Natural killer cell (primary cell): ENCODE measurements at regions of chr1 and their contacts with region 1.

Region 1: GRCh38 chr1:63615768-63616420 is 22.7 kb downstream of the PGM1 start:
- DNase-seq: peak; percentile 27 to 85
- ATAC-seq: peak; percentile 81 to 84 (median 82)
- H3K4me3 ChIP-seq: no peak overlapping the region
- H3K4me3 Mint-ChIP-seq: no peak overlapping the region
- H3K27ac ChIP-seq: no peak overlapping the region
- H3K27ac Mint-ChIP-seq: no peak overlapping the region
- H3K4me1 ChIP-seq: no peaks in the 10 kb centered on the region
- H3K4me1 Mint-ChIP-seq: peaks cover 23 to 26% of the 10 kb centered on the region in 2 donors
- H3K27me3 ChIP-seq: no peaks in the 10 kb centered on the region
- H3K27me3 Mint-ChIP-seq: no peaks in the 10 kb centered on the region
- CTCF ChIP-seq: peak; percentile 86

Region 2: GRCh38 chr1:63915121-63915520 is 299.2 kb after region 1 on chr1:
- intact Hi-C with region 1: loop called (anchors 1 kb)
- DNase-seq: peak in 1 of 2 donors; percentile 11
- ATAC-seq: peak in 2 of 3 donors; percentile 53 to 67
- H3K4me3 ChIP-seq: no peak overlapping the region
- H3K4me3 Mint-ChIP-seq: no peak overlapping the region
- H3K27ac ChIP-seq: no peak overlapping the region
- H3K27ac Mint-ChIP-seq: no peak overlapping the region
- H3K4me1 ChIP-seq: no peaks in the 10 kb centered on the region
- H3K4me1 Mint-ChIP-seq: no peaks in the 10 kb centered on the region
- H3K27me3 ChIP-seq: no peaks in the 10 kb centered on the region
- H3K27me3 Mint-ChIP-seq: peaks cover 6 to 17% of the 10 kb centered on the region in 2 donors
- CTCF ChIP-seq: no peak

Region 3: GRCh38 chr1:64136752-64137411 is 521.0 kb after region 1 on chr1:
- intact Hi-C with region 1: loop called (anchors 1 kb)
- DNase-seq: peak; percentile 43 to 78
- ATAC-seq: peak; percentile 70 to 88 (median 75)
- H3K4me3 ChIP-seq: no peak overlapping the region
- H3K4me3 Mint-ChIP-seq: no peak overlapping the region
- H3K27ac ChIP-seq: no peak overlapping the region
- H3K27ac Mint-ChIP-seq: no peak overlapping the region
- H3K4me1 ChIP-seq: no peaks in the 10 kb centered on the region
- H3K4me1 Mint-ChIP-seq: no peaks in the 10 kb centered on the region
- H3K27me3 ChIP-seq: no peaks in the 10 kb centered on the region
- H3K27me3 Mint-ChIP-seq: peaks cover 5 to 17% of the 10 kb centered on the region in 2 donors
- CTCF ChIP-seq: peak; percentile 78

Region 4: GRCh38 chr1:64246294-64246917 is 630.5 kb after region 1 on chr1:
- intact Hi-C with region 1: loop called (anchors 1 kb)
- DNase-seq: peak in 1 of 2 donors; percentile 60
- ATAC-seq: peak in 1 of 3 donors; percentile 37
- H3K4me3 ChIP-seq: no peak overlapping the region
- H3K4me3 Mint-ChIP-seq: no peak overlapping the region
- H3K27ac ChIP-seq: no peak overlapping the region
- H3K27ac Mint-ChIP-seq: no peak overlapping the region
- H3K4me1 ChIP-seq: no peaks in the 10 kb centered on the region
- H3K4me1 Mint-ChIP-seq: peaks cover 11% of the 10 kb centered on the region in 2 donors
- H3K27me3 ChIP-seq: peaks cover 6% of the 10 kb centered on the region
- H3K27me3 Mint-ChIP-seq: peaks cover 6 to 15% of the 10 kb centered on the region in 2 donors
- CTCF ChIP-seq: peak; percentile 79